ENCODE measurements at regions of chr6 and their contacts with region 1.

Region 1: GRCh38 chr6:150417899-150418826 is 49.4 kb downstream of the IYD start:
- DNase-seq: no peak
- H3K4me3 ChIP-seq: peak overlapping the region in 7 of 8 donors; percentile 23 to 66 (median 30)
- H3K27ac ChIP-seq: peak overlapping the region; percentile 65 to 92 (median 82)
- H3K4me1 ChIP-seq: peaks cover 0 to 20% (median 10%) of the 10 kb centered on the region in 6 donors
- H3K27me3 ChIP-seq: no peaks in the 10 kb centered on the region
- CTCF ChIP-seq: peak; percentile 52 to 90 (median 77)
- POLR2A ChIP-seq: no peak

Region 2: GRCh38 chr6:150377211-150377781 is 40.9 kb before region 1 on chr6:
- intact Hi-C with region 1: no loop called
- DNase-seq: no peak
- H3K4me3 ChIP-seq: no peak overlapping the region
- H3K27ac ChIP-seq: no peak overlapping the region
- H3K4me1 ChIP-seq: no peaks in the 10 kb centered on the region
- H3K27me3 ChIP-seq: peaks cover 0 to 4% (median 0%) of the 10 kb centered on the region in 7 donors
- CTCF ChIP-seq: no peak
- POLR2A ChIP-seq: no peak

Region 3: DNA sequence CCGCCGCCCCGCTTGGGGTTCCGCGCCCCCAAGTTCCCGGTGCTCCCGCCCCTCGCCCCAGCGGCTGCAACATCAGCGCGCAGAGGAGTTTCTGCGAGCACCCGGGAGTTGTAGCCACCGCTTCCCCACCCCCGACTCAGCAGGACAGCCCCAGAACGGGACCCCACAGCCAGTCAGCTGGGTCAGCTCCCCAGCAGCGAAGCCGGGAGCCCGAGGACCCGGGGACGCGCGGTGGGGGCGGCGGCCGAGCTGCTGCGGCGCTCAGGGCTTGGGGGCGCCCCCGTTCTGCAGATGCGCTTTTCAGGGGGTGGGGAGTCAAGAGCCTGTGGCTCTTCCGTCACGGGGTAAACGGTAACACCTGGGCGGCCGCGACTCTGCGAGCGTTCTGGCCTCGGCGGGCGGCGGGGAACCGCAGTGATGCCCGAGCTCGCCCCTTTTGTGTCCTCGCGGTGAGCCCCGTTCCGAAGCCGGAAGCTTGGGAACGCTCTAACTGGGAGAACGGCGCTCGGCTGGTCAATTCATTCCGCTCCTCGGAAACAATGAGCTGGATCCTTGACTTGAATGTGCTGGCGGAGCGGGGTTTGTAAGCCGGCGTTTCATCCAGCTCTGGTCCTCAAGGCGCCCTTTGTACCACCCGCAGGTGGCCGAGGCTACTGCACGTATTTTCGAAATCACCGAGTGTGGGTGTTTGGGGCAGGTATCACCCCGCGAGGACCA is 182.3 kb after region 1 on chr6:
- intact Hi-C with region 1: loop called (anchors 10 kb)
- DNase-seq: peak; percentile 95
- H3K4me3 ChIP-seq: peak overlapping the region; percentile 69 to 89 (median 75)
- H3K27ac ChIP-seq: peak overlapping the region; percentile 90 to 99 (median 96)
- H3K4me1 ChIP-seq: peaks cover 12 to 71% (median 37%) of the 10 kb centered on the region in 6 donors
- H3K27me3 ChIP-seq: peaks cover 0 to 46% (median 5%) of the 10 kb centered on the region in 7 donors
- CTCF ChIP-seq: peak in 10 of 11 experiments; percentile 30 to 65 (median 54)
- POLR2A ChIP-seq: peak in 1 of 3 donors; percentile 26

Region 4: DNA sequence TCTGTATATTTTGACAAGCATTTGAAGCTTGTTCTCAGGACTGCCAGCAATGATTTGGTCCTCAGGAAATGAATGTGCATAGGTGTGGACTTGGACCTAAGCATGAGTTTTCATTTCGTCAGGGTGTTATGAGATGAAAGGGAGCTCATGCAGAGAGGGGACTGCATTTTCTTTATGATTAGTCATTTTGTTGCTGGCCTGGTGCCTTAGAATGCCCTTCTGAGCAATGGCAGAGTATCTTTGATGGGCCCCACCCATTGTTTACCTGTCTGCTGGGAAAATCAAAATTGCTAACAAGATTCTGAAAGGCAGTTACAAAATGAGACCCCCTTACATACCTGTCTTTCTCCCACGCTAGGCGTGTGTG is 395.8 kb after region 1 on chr6:
- intact Hi-C with region 1: loop called (anchors 2 kb)
- DNase-seq: no peak
- H3K4me3 ChIP-seq: no peak overlapping the region
- H3K27ac ChIP-seq: peak overlapping the region in 7 of 8 donors; percentile 10 to 79 (median 60)
- H3K4me1 ChIP-seq: peaks cover 9 to 67% (median 45%) of the 10 kb centered on the region in 6 donors
- H3K27me3 ChIP-seq: no peaks in the 10 kb centered on the region
- CTCF ChIP-seq: no peak
- POLR2A ChIP-seq: no peak

Measured in spleen (tissue), 13 donors.